ENCODE measurements at regions of chr9 and their contacts with region 1.

Region 1: DNA sequence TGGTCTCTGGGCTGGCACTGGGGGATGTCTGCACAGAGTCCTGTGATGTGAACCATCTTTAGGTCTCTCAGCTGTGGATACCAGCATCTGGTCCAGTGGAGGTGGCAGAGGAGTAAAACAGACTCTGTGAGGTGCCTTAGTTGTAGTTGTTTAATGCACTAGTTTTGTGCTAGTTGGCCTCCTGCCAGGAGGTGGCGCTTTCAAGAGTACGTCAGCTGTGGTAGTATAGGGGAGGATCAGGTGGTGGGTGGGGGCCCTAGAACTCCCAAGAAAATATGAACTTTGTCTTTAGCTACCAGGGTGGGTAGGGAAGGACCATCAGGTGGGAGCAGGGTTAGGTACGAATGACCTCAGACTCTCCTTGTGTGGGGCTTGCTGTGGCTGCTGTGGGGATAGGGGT is 197.1 kb downstream of the TMC1 start:
- DNase-seq: peak in 1 of 2 experiments; percentile 59
- H3K4me3 ChIP-seq: no peak overlapping the region
- H3K27ac ChIP-seq: no peak overlapping the region
- H3K4me1 ChIP-seq: peaks cover 0 to 11% (median 3%) of the 10 kb centered on the region in 4 experiments; a peak in 3 of 7 replicates
- H3K27me3 ChIP-seq: no peaks in the 10 kb centered on the region
- CTCF ChIP-seq: peak; percentile 24 to 53 (median 28); a peak in 3 of 4 replicates
- EP300 ChIP-seq: no peak
- POLR2A ChIP-seq: no peak
- RAD21 ChIP-seq: peak; percentile 10 to 31; a peak in 2 of 4 replicates

Region 2: DNA sequence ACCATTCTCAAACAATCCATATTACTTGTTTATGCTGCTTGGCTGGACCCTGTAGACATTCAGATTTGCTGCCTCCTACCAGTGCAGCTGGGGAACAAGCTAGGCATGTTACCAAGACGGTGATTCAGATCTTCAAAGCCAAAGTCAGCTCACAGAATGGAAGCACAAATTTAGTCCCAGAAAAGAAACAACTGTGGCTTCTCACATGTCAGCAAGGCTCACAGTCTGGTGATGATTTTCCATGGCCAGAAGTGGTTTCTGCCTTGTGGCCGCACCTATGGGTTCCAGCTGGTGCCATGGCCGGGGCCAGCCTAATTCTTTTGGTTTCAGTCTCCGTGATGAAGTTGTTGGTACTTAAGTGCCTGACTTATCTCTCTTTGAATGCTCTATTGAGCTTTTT is 14.9 kb before region 1 on chr9:
- CTCF ChIA-PET with region 1: interaction called, 23 read pairs
- POLR2A ChIA-PET with region 1: no interaction called
- DNase-seq: no peak
- H3K4me3 ChIP-seq: no peak overlapping the region
- H3K27ac ChIP-seq: no peak overlapping the region
- H3K4me1 ChIP-seq: peaks cover 0 to 2% (median 0%) of the 10 kb centered on the region in 4 experiments; a peak in 1 of 7 replicates
- H3K27me3 ChIP-seq: no peaks in the 10 kb centered on the region
- CTCF ChIP-seq: no peak
- EP300 ChIP-seq: no peak
- POLR2A ChIP-seq: no peak
- RAD21 ChIP-seq: no peak

Region 3: DNA sequence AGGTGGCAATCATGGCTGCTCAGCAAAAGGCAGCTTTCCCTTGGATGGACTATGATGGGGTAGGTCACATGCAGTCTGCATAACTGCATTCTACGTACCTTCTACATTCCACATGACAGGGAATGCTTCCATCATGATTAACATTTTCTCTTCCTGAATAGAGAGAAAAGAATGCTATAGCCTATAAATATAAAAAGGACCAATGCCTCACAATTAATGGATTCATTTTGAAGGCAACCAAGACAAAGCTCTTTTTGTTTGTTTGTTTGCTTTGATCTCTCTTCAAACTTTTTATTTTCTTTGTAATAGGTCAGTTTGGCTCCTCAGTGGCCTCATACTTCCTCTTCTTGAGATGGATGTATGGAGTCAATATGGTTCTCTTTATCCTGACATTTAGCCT is 33.0 kb after region 1 on chr9:
- CTCF ChIA-PET with region 1: interaction called, 10 read pairs
- POLR2A ChIA-PET with region 1: no interaction called
- DNase-seq: no peak
- H3K4me3 ChIP-seq: no peak overlapping the region
- H3K27ac ChIP-seq: no peak overlapping the region
- H3K4me1 ChIP-seq: no peaks in the 10 kb centered on the region; a peak in 2 of 7 replicates
- H3K27me3 ChIP-seq: no peaks in the 10 kb centered on the region
- CTCF ChIP-seq: no peak
- EP300 ChIP-seq: no peak
- POLR2A ChIP-seq: no peak
- RAD21 ChIP-seq: no peak

Region 4: DNA sequence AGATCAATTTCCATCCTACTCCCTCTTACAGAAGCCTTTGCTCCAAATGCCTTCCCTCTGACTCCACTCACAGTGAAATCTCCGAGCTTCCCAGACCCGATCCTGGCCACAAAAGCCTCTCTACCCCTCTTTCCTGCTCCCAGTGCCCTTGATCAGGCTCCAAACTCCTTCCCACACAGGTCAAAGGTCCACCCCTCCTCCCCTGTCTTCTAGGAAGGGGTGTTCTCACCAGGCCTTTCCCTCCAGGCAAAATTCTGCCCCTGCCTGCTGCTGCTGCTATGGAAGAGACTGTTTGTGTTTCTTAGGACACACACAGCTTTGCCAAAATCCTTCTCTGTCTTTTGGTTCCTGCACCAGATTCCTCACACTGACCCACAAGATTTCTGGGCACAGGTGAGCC is 320.1 kb after region 1 on chr9:
- CTCF ChIA-PET with region 1: no interaction called
- POLR2A ChIA-PET with region 1: no interaction called
- DNase-seq: no peak
- H3K4me3 ChIP-seq: no peak overlapping the region
- H3K27ac ChIP-seq: no peak overlapping the region
- H3K4me1 ChIP-seq: peaks cover 0 to 2% (median 1%) of the 10 kb centered on the region in 4 experiments; a peak in 1 of 7 replicates
- H3K27me3 ChIP-seq: no peaks in the 10 kb centered on the region
- CTCF ChIP-seq: no peak
- EP300 ChIP-seq: no peak
- POLR2A ChIP-seq: no peak
- RAD21 ChIP-seq: no peak